ENCODE measurements at regions of chr15 and their contacts with region 1.

Region 1: DNA sequence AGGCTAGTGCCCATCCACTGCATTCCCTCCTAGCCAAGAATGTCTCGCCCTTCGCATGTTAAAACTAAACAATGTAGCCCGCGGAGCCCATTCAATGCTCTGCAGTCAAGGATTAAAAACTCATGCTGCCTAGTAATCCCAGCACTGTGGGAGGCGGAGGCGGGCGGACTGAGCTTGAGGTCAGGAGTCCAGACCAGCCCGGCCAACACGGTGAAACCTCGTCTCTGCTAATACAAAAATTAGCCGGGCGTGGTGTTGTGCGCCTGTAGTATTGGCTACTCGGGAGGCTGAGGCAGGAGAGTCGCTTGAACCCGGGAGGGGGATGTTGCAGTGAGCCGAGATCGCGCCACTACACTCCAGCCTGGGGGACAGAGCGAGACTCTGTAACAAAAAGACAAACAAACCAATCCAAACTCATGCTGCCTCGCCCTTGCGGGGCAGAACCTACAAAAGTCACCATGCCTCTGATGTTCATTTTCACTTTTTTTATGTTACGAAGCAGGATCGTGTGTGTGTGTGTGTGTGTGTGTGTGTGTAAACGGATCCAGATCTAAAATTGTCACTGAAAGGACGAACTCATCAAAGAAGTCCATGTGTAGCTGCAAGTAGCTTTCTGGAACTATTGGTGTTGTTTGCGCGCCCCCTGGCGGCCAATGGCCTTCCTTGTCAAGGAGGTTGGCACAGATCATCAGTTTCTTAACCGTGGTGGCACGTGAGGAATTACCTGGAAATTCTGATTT is 54.8 kb upstream of the SPESP1 start:
- DNase-seq: peak; percentile 90
- H3K4me3 Mint-ChIP-seq: no peak overlapping the region
- H3K27ac Mint-ChIP-seq: no peak overlapping the region
- H3K4me1 Mint-ChIP-seq: peaks cover 4% of the 10 kb centered on the region
- H3K27me3 Mint-ChIP-seq: peaks cover 34% of the 10 kb centered on the region

Region 2: DNA sequence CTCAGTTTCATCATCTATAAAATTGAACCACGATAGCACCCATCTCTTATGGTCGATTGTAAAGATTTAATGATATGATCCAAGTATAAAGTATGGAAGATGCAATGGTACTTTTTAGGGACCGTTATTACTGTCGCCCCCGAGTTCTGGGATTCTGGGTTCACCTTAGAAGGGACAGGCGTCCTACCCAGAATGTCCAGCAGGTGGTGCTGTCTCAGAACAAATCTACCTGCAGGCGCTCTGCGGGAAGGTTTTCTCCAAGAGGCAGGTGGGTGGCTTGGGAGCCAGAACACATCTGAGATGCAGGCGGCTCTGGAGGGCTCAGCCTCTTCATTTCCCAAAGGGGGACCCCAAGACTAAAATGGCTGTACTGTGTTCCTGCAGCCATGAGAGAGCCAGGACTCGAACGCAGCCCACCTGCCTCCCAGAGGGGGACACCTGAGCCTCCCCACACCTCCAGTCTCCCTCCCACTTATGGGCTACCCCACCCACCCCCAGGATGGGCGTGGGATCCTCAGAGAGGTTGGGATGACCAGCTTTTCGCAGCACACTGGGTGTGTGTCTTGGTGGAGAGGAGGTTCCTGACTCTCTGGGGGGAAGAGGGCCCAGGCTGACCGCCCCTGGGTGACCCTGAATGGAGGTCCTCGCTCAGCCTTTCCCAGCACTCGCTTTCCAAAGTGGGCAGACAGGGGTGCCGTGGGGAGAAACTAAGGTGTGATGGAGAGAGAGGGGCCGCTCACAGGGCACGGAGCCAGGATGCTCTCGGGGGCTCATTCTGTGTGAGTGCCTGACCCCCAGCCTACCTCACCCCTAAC is 324.9 kb before region 1 on chr15:
- CTCF ChIA-PET with region 1: interaction called, 22 read pairs
- POLR2A ChIA-PET with region 1: no interaction called
- DNase-seq: peak; percentile 75
- H3K4me3 Mint-ChIP-seq: no peak overlapping the region
- H3K27ac Mint-ChIP-seq: no peak overlapping the region
- H3K4me1 Mint-ChIP-seq: peaks cover 8% of the 10 kb centered on the region
- H3K27me3 Mint-ChIP-seq: peaks cover 47% of the 10 kb centered on the region

Region 3: DNA sequence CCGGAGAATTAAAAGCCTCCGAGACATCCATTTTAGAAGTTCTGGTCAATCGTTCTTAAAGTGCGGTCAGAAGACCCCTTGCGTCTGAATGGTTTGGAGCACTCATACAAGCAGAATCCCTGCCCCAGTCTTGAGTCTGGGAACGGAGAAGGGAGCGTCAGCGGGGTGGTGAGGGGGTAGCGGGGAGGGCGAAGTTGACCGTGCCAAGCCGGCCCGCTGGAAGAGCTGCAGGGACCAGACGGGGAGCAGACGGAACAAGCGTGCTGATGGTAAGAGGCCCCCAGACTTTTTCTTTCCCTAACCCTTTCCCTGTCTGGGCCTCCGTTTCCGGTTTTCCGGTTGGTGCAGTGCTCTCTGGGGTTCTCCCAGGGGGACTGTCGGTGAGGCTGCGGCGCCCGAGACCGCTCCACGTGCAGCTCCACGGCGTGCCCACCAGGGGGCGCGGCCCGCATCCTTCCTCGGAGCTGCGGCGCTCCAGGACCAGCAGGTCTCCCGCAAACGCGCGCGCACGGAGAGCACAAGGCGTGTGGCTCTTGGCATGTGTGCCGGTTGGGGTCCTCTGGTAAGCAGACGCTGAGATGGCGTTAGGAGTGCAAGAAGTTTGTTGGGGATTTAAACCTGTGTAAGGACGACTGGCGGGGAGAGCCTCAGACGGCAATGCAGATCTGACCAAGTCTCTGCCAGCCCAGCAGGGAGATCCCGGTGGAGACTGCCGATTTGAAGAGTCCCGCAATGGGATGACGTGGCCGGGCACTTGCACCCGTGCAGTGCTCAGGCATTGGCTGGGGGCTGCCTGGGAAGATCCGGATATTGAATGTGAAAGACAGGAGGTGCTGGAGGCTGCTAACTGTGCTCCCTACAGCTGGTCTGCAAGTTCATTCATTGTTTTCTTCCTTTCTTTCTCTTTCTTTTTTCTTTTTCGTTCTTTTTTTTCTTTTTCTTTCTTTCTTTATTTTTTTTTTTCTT is 315.9 kb before region 1 on chr15:
- CTCF ChIA-PET with region 1: interaction called, 23 read pairs
- POLR2A ChIA-PET with region 1: no interaction called
- DNase-seq: peak; percentile 73
- H3K4me3 Mint-ChIP-seq: peak overlapping the region; percentile 57
- H3K27ac Mint-ChIP-seq: no peak overlapping the region
- H3K4me1 Mint-ChIP-seq: peaks cover 21% of the 10 kb centered on the region
- H3K27me3 Mint-ChIP-seq: peaks cover 50% of the 10 kb centered on the region

Region 4: DNA sequence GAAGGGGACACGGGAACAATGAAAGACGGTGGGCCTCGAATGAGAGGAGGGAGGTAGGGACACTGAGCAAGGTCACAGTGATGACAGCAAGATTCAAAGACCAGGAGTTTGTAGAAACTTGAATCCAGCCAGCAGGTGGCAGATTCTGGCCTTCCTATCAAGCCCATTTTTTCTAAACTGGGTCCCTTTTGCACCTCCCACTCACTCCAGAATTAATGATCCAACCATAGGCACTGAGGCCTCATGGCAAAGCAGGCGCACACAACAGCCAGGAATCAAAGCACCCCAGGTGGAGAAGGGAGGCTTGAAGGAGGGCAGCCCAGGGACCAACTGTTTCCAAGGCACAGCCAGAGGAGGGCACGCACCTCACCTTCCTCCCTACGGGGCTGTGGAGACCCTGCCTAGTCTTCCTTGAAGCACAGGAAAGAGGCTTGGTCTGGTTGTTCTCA is 145.1 kb before region 1 on chr15:
- CTCF ChIA-PET with region 1: interaction called, 17 read pairs
- POLR2A ChIA-PET with region 1: no interaction called
- DNase-seq: no peak
- H3K4me3 Mint-ChIP-seq: no peak overlapping the region
- H3K27ac Mint-ChIP-seq: no peak overlapping the region
- H3K4me1 Mint-ChIP-seq: peaks cover 3% of the 10 kb centered on the region
- H3K27me3 Mint-ChIP-seq: peaks cover 7% of the 10 kb centered on the region

Region 5: DNA sequence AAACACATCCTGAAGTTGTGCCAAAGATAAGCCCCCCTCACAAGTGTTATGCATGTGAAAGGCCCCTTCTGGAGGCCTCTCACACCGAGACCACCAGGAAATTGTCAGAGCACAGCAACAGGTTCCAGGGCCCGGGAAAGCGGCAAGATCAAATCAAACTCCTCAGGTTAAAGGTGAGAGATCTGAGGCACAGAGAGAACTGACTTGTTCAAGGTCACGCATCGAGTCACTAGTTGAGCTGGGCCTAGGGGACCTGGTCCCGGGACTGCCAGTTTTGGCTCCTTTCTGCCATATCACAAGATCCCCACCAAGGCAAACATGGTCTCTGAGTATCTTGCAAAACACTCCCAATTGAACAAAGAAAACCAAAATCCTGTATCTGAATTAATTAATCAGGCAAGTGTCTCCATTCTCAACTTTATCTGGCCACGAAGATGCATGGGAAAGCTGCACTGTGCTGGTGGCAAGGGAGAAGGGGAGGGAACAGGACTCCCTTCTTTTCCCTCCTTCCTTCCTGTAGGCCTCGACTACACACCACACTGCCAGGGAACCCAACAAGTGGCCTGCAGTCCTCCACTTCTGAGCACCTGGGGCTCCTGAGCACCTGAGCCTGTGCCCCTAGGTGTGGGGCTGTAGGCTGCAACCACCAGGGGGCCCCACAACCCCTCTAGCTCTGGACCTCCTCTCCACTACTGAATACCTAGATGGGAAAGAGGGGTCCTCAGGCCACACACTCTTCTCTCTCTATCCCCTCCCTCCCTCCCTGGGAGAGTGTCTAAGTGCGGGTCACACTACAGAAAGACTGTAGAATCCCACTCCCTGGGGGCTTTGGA is 92.1 kb before region 1 on chr15:
- CTCF ChIA-PET with region 1: interaction called, 51 read pairs
- POLR2A ChIA-PET with region 1: no interaction called
- DNase-seq: peak; percentile 69
- H3K4me3 Mint-ChIP-seq: no peak overlapping the region
- H3K27ac Mint-ChIP-seq: peak overlapping the region; percentile 37
- H3K4me1 Mint-ChIP-seq: peaks cover 40% of the 10 kb centered on the region
- H3K27me3 Mint-ChIP-seq: no peaks in the 10 kb centered on the region

Region 6: DNA sequence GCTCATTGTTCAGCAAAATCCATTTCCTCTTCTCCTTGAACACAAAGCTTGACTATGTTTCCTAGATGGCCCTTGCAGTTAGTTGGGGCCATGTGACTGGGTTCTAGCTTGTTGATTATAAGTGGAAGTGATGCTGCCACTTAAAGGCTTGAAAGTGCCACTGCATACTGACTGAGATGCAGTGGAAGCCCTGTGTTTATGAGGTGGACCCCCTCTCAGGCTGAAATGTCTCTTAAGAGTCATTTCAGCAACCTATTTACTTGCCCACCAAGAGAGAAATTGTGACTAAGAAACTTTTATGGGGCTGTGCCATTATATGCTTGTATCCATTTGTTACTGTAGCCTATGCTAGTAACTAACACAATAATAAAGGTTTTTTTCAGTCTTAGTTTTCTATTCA is 46.5 kb before region 1 on chr15:
- CTCF ChIA-PET with region 1: interaction called, 14 read pairs
- POLR2A ChIA-PET with region 1: no interaction called
- DNase-seq: no peak
- H3K4me3 Mint-ChIP-seq: no peak overlapping the region
- H3K27ac Mint-ChIP-seq: no peak overlapping the region
- H3K4me1 Mint-ChIP-seq: peaks cover 15% of the 10 kb centered on the region
- H3K27me3 Mint-ChIP-seq: peaks cover 22% of the 10 kb centered on the region

Region 7: DNA sequence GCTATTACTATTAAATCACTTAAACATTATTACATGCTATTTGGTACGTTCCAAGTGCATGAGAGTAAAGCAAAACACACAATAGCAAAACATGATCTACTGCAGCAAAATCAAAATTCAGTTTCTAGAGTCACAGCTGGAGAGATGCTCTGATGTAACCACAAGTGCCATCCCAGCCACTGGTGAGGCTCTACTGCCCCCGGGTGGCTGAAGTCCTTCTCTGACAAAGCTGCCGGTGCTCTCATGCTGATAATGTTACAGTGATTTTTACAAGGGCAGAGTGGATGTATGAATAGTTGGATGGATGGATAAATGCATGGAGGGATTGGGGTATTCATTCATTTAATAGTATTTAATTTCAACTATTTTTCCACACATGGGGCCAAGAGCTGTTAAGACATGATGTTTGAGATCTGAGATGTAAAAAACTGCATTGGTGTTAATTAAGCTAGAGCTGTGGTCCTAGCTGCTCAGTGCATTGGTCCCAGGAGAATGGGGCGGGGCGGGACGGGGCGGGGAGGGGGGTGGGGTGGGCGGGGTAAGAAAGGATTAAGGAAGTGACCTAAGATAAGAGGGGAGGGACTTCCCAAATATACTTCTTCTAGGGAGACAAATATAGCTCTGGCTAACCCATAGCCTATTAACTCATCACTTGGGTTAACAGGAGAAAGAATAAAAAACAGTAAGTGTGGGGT is 49.5 kb after region 1 on chr15:
- CTCF ChIA-PET with region 1: interaction called, 11 read pairs
- POLR2A ChIA-PET with region 1: no interaction called
- DNase-seq: peak; percentile 62
- H3K4me3 Mint-ChIP-seq: no peak overlapping the region
- H3K27ac Mint-ChIP-seq: no peak overlapping the region
- H3K4me1 Mint-ChIP-seq: peaks cover under 1% of the 10 kb centered on the region
- H3K27me3 Mint-ChIP-seq: peaks cover 29% of the 10 kb centered on the region

Measured in activated CD4-positive, alpha-beta memory T cell treated with anti-CD3 and anti-CD28 coated beads, Interleukin-2, amount 10 ng/mL, durations not matched to agents 7 days and 5 days (primary cell).